CD4-positive, alpha-beta memory T cell (primary cell): ENCODE measurements at regions of chr6 and their contacts with region 1.

Region 1: DNA sequence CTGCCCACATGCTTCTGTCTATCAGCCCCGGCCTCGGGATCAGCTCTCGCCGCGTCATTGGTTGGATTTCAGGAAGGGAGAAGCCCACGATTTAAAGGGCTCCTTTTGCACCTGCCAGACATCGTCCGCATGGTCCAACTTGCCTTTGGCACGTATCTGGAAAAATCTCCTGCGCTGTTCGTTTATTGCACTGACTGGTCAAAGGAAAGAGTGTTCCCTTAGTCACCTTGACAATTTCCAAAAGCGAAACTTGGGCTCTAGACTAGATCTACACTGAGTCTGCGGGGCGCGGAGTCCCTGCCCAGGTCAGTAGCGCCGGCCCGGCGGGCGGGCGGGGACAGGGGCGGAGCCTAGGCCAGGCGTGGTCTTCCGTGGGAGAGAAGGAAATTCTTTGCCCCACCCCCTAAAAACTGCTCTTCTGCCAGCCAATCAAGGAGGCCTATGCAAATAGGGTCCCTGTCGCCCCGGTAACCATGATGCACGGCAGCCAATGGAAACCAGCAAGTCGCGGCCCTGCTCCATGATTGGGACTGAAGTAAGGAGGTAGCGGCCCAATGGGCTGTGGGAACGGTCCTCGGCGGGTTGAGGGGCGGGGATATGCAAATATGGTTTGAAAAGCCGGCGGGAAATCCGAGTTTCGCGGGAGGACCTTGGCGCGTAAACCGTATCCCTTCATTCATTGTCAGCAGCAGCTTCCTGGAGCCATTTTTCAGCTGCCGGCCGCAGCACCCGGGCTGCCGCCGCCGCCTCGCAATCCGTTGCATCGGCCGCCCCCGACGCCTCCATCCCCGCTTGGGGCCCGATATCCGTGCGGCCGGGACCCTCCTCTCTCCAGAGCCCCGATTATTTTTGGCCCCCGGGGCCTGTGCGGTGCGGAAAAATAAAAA is at the start of gene E2F3:
- DNase-seq: peak; percentile 97 to 100 (median 99)
- H3K4me3 ChIP-seq: peak within 1 kb of the TSS; percentile 19 to 72
- H3K4me3 Mint-ChIP-seq: peak within 1 kb of the TSS; percentile 89 to 97 (median 92)
- H3K27ac ChIP-seq: peak within 1 kb of the TSS; percentile 73
- H3K27ac Mint-ChIP-seq: peak within 1 kb of the TSS; percentile 85 to 97 (median 92)
- H3K4me1 ChIP-seq: peaks cover 27% of the 10 kb centered on the region
- H3K4me1 Mint-ChIP-seq: peaks cover 20 to 37% (median 28%) of the 10 kb centered on the region in 4 donors
- H3K27me3 ChIP-seq: no peaks in the 10 kb centered on the region
- H3K27me3 Mint-ChIP-seq: no peaks in the 10 kb centered on the region
- total RNA-seq, gene E2F3: 25.2 to 25.5 TPM

Region 2: GRCh38 chr6:20212392-20213217 is 188.8 kb before region 1 on chr6 and contains the start of gene MBOAT1:
- CTCF ChIA-PET with region 1: interaction called, 4 read pairs
- POLR2A ChIA-PET with region 1: interaction called, 17 read pairs
- intact Hi-C with region 1: loop called (anchors 2 kb)
- DNase-seq: peak; percentile 60 to 76 (median 66)
- H3K4me3 ChIP-seq: peak within 1 kb of the TSS; percentile 59 to 89
- H3K4me3 Mint-ChIP-seq: peak within 1 kb of the TSS; percentile 97 to 99 (median 98)
- H3K27ac ChIP-seq: peak within 1 kb of the TSS; percentile 56
- H3K27ac Mint-ChIP-seq: peak within 1 kb of the TSS; percentile 93 to 96 (median 96)
- H3K4me1 ChIP-seq: peaks cover 43% of the 10 kb centered on the region
- H3K4me1 Mint-ChIP-seq: peaks cover 30 to 59% (median 37%) of the 10 kb centered on the region in 4 donors
- H3K27me3 ChIP-seq: no peaks in the 10 kb centered on the region
- H3K27me3 Mint-ChIP-seq: no peaks in the 10 kb centered on the region
- total RNA-seq, gene MBOAT1: 21.3 to 24.6 TPM

Region 3: DNA sequence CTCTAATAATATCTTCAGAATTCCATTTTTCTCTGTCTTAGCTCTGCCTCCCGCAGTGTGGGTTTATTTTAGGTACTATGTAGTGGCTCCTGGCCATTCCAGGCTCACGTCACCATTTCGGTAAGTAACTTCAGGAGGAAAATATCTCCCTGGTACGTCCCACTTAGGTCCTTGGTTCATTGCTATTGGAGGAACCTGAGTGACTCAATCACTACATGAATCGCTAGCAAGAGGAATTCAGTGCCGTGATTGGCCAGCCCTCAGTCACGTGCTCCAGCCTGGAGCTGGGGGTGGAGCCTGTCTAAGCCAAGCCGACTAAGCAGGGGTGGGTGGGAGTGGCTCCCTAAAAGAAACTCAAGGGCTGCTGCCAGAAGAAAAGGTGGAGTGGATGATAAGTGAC is 67.1 kb before region 1 on chr6:
- CTCF ChIA-PET with region 1: interaction called, 14 read pairs
- POLR2A ChIA-PET with region 1: interaction called, 17 read pairs
- intact Hi-C with region 1: loop called (anchors 1 kb)
- DNase-seq: no peak
- H3K4me3 ChIP-seq: no peak overlapping the region
- H3K4me3 Mint-ChIP-seq: no peak overlapping the region
- H3K27ac ChIP-seq: no peak overlapping the region
- H3K27ac Mint-ChIP-seq: no peak overlapping the region
- H3K4me1 ChIP-seq: peaks cover 21% of the 10 kb centered on the region
- H3K4me1 Mint-ChIP-seq: peaks cover 17 to 22% (median 19%) of the 10 kb centered on the region in 4 donors
- H3K27me3 ChIP-seq: no peaks in the 10 kb centered on the region
- H3K27me3 Mint-ChIP-seq: no peaks in the 10 kb centered on the region

Region 4: DNA sequence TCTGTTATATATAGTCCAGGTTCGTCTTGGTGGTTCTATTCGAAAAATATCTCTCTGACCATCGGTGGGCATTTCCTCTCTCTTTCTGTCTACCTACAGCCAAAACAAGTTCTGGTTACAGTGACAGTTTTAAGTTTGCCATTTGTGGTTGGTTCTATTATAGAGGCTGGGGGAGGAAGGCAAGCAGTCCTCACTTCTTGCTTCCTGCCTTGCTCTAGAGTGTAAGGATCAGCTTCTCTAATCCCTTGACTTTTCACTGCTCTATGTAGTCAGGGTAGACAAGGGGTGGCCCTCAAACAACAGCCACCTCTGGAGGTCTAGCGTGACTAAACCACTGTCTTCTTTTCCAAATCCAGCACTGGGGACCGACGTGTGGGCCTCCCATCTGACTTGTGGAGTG is 16.4 kb after region 1 on chr6:
- CTCF ChIA-PET with region 1: interaction called, 31 read pairs
- POLR2A ChIA-PET with region 1: interaction called, 14 read pairs
- intact Hi-C with region 1: no loop called
- DNase-seq: no peak
- H3K4me3 ChIP-seq: no peak overlapping the region
- H3K4me3 Mint-ChIP-seq: peak overlapping the region in 3 of 8 donors; percentile 40 to 57 (median 42)
- H3K27ac ChIP-seq: no peak overlapping the region
- H3K27ac Mint-ChIP-seq: peak overlapping the region in 3 of 7 donors; percentile 38 to 79 (median 50)
- H3K4me1 ChIP-seq: peaks cover 36% of the 10 kb centered on the region
- H3K4me1 Mint-ChIP-seq: peaks cover 39 to 59% (median 48%) of the 10 kb centered on the region in 4 donors
- H3K27me3 ChIP-seq: no peaks in the 10 kb centered on the region
- H3K27me3 Mint-ChIP-seq: no peaks in the 10 kb centered on the region

Region 5: DNA sequence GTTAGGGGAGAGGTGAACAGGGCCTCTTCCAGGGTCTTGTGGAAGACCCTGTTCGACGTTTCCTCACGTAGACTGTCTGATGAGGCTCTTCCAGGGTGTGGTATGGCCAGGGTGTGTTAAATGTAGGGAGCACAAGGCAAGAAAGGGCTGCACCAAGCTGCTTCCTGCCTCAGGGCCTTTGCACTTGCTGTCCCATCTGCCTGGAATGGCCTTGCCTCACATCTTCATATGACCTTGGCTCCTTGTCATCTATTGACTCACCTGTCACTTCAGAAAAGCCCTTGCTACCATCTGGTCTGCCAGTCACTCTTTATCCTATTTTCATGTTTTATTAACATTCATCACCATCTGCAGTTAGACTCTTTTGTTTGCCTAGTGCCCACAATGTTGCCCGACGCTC is 31.2 kb after region 1 on chr6:
- CTCF ChIA-PET with region 1: no interaction called
- POLR2A ChIA-PET with region 1: no interaction called
- intact Hi-C with region 1: no loop called
- DNase-seq: no peak
- H3K4me3 ChIP-seq: no peak overlapping the region
- H3K4me3 Mint-ChIP-seq: no peak overlapping the region
- H3K27ac ChIP-seq: no peak overlapping the region
- H3K27ac Mint-ChIP-seq: no peak overlapping the region
- H3K4me1 ChIP-seq: no peaks in the 10 kb centered on the region
- H3K4me1 Mint-ChIP-seq: peaks cover 2 to 8% (median 3%) of the 10 kb centered on the region in 4 donors
- H3K27me3 ChIP-seq: no peaks in the 10 kb centered on the region
- H3K27me3 Mint-ChIP-seq: no peaks in the 10 kb centered on the region

Region 6: GRCh38 chr6:20534295-20535262 is 133.1 kb after region 1 on chr6 and contains the start of gene CDKAL1:
- CTCF ChIA-PET with region 1: interaction called, 28 read pairs
- POLR2A ChIA-PET with region 1: interaction called, 7 read pairs
- intact Hi-C with region 1: loop called (anchors 2 kb)
- DNase-seq: peak; percentile 85 to 90 (median 86)
- H3K4me3 ChIP-seq: peak within 1 kb of the TSS; percentile 89 to 99
- H3K4me3 Mint-ChIP-seq: peak within 1 kb of the TSS; percentile 92 to 100 (median 99)
- H3K27ac ChIP-seq: peak within 1 kb of the TSS; percentile 72
- H3K27ac Mint-ChIP-seq: peak within 1 kb of the TSS; percentile 94 to 99 (median 99)
- H3K4me1 ChIP-seq: peaks cover 25% of the 10 kb centered on the region
- H3K4me1 Mint-ChIP-seq: peaks cover 22 to 52% (median 39%) of the 10 kb centered on the region in 4 donors
- H3K27me3 ChIP-seq: no peaks in the 10 kb centered on the region
- H3K27me3 Mint-ChIP-seq: no peaks in the 10 kb centered on the region
- total RNA-seq, gene CDKAL1: 22.3 to 22.7 TPM